Mucosa of descending colon (tissue), 3 donors: ENCODE measurements at regions of chr5 and their contacts with region 1.

Region 1: GRCh38 chr5:131165119-131165727 is at the start of gene HINT1:
- DNase-seq: peak; percentile 96 to 97 (median 97)
- ATAC-seq: peak; percentile 92
- H3K4me3 ChIP-seq: peak within 1 kb of the TSS; percentile 71
- H3K4me1 ChIP-seq: peaks cover 3% of the 10 kb centered on the region
- CTCF ChIP-seq: peak; percentile 10
- total RNA-seq, gene HINT1: 223 to 289 (median 275) TPM

Region 2: DNA sequence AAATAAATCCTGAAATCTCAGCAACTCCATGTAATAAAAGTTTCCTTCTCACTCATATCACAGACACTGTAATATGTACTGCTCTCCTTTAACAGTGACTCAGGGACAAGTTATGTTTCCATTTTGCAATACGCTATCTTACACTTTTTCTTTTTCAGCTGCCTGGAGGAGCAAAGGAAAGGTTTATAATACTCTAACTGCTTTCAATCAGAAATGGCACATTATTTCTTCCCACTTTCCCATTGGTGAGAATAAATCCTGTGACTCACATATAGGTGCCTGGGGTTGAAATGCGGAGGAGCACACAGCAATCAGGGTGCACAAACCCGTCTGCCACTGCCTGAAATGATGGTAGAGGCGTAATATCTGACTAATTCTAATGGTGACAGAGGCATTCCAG is 186.7 kb before region 1 on chr5:
- intact Hi-C with region 1: no loop called
- DNase-seq: no peak
- ATAC-seq: no peak
- H3K4me3 ChIP-seq: no peak overlapping the region
- H3K4me1 ChIP-seq: no peaks in the 10 kb centered on the region
- CTCF ChIP-seq: no peak

Region 3: DNA sequence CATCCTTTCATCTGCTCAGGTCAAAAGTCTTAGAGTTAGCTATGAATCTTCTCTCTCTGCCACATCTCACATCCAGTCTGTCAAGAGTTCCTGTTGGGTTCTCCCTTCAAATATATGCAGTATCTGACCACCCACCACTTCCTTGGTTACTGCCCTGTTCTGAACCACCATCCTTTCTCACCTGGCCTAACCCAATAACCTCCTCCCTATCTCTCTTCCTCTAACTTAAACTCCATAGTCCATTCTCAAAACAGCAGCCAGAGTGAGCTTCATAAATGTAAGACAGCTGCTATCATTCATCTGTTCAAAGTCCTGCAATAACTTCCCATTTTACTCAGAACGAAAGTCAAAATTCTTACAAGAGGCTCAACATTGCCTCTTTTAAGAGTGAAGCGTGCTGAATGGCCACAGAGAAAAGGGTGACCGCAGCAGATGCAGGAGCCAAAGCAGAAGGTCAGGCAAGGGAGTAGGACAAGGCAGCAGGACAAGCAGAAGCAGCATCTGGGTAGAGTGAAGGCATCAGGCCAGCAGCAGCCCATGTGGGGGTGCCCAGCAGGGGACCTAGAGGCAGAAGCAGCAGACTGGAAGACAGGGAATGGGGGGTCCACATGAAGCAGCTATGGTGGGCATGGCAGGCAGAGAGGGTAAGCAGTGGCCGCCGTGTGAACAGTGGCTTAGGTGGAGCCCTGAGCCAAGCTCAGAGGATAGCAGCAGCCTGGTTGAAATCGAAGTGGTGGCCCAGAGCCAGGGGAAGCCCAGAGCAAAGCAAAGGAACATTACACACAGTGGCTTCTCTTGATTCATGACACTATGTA is 59.4 kb after region 1 on chr5:
- intact Hi-C with region 1: loop called in 1 of 2 experiments (anchors 2 kb)
- DNase-seq: peak; percentile 56 to 62 (median 61)
- ATAC-seq: peak; percentile 68
- H3K4me3 ChIP-seq: no peak overlapping the region
- H3K4me1 ChIP-seq: peaks cover 19% of the 10 kb centered on the region
- CTCF ChIP-seq: no peak

Region 4: DNA sequence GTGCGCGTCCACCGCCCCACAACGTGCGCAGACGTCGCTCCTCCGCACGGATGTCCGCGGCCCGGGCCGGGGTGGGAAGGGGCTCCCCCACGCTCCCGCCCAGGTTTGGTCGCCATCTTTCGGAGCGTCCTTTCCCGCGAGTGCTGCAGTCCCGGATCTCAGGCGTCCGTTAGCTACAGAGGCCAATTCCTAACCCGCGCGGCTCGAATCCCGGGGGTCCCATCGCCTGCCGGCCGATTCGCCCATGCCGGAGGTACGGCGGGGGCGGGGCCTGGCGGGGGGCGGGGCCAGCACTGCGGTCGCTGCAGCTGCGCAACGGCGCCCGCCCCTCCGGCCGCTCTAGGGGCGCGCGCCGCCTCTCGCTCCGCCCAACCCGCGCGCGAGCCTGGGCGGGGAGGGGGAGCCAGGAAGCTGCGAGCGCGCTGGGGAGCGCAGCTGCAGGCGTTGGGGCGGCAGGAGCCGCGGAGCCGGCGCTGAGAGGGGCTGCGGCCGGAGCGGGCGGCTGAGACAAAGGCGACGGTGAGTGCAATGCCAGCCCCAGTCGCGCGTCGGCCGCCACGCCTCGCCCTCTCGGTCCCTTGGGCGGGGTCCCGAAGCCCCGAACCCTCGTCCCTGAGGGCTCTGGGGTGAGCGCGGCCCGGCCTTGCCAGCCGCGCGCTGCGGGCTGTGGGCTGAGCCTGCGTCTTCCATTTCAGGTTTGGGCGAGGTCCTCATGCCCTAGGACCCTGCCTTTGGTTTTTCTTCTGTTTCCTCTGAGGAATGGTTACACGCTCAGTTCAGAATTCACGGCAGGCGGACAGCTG is 98.6 kb after region 1 on chr5 and contains the start of gene CDC42SE2:
- intact Hi-C with region 1: loop called (anchors 10 kb)
- DNase-seq: peak; percentile 90 to 93 (median 92)
- ATAC-seq: peak; percentile 96
- H3K4me3 ChIP-seq: peak within 1 kb of the TSS; percentile 77
- H3K4me1 ChIP-seq: peaks cover 17% of the 10 kb centered on the region
- CTCF ChIP-seq: no peak
- total RNA-seq, gene CDC42SE2: 60.5 to 116 (median 101) TPM

Region 5: GRCh38 chr5:131382407-131383395 is 217.5 kb after region 1 on chr5:
- intact Hi-C with region 1: loop called in 1 of 2 experiments (anchors 10 kb)
- DNase-seq: peak in 1 of 3 donors; percentile 40
- ATAC-seq: peak; percentile 90
- H3K4me3 ChIP-seq: no peak overlapping the region
- H3K4me1 ChIP-seq: peaks cover 30% of the 10 kb centered on the region
- CTCF ChIP-seq: no peak